Dorsolateral prefrontal cortex (tissue), 120 donors: ENCODE measurements at regions of chr20 and their contacts with region 1.

Region 1: DNA sequence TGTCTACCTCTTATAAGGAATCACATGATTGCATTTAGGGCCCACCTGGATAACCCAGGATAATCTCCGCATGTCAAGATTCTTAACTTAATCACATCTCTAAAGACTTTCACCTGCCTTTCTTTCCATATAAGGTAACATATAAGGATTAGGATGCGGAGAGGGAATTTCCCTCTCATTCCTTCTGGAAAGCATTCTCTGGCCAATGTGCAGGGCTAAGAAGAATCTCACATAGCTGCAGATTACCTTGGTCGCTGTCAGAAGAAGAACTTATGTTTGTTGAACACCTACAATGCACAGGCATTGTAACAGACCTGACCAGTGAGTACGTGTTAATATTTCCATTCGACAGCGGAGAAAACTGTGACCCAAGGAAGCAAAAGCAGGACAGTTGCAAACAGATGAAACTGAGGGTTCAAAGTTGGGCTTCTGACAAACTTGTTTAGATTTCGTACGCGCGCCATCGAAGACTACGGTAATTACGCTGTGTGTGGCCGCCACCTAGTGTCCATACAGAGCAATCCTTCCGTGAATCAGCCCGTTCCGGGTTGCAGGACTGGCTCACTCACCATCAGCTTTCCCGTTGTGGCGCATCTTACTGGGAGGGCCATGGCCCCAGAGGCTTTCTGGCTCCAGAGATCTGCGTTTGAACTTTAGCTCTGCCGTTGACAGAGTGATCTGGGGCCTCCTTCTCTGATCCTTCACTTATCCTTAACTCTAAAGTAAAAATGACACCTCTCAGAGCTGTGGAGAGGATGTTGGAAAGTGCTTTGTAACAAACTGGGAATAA is 9.5 kb downstream of the C20orf202 start:
- DNase-seq: peak; percentile 52 to 82 (median 68)
- H3K4me3 ChIP-seq: peak overlapping the region in 2 of 59 donors; percentile 1 to 5
- H3K27ac ChIP-seq: no peak overlapping the region
- H3K27me3 ChIP-seq: no peaks in the 10 kb centered on the region
- CTCF ChIP-seq: peak; percentile 47 to 89 (median 80)

Region 2: GRCh38 chr20:967796-968742 is 244.7 kb before region 1 on chr20:
- intact Hi-C with region 1: loop called in 1 of 2 experiments (anchors 10 kb)
- DNase-seq: no peak
- H3K4me3 ChIP-seq: no peak overlapping the region
- H3K27ac ChIP-seq: no peak overlapping the region
- H3K27me3 ChIP-seq: peaks cover 0 to 6% (median 0%) of the 10 kb centered on the region in 45 donors
- CTCF ChIP-seq: no peak

Region 3: GRCh38 chr20:1118336-1119127 is 94.3 kb before region 1 on chr20 and contains the start of gene PSMF1:
- intact Hi-C with region 1: loop called in 1 of 2 experiments (anchors 10 kb)
- DNase-seq: peak; percentile 85 to 95 (median 92)
- H3K4me3 ChIP-seq: peak within 1 kb of the TSS; percentile 59 to 100 (median 96)
- H3K27ac ChIP-seq: peak within 1 kb of the TSS; percentile 29 to 91 (median 77)
- H3K27me3 ChIP-seq: no peaks in the 10 kb centered on the region
- CTCF ChIP-seq: peak in 53 of 56 donors; percentile 13 to 71 (median 48)
- total RNA-seq, gene PSMF1: 72.6 to 177 (median 122) TPM